Natural killer cell (primary cell): ENCODE measurements at regions of chr5 and their contacts with region 1.

Region 1: GRCh38 chr5:76641514-76642120 is 18.4 kb upstream of the F2RL2 start:
- DNase-seq: peak; percentile 35 to 81
- ATAC-seq: peak; percentile 71 to 81 (median 72)
- H3K4me3 ChIP-seq: no peak overlapping the region
- H3K4me3 Mint-ChIP-seq: no peak overlapping the region
- H3K27ac ChIP-seq: no peak overlapping the region
- H3K27ac Mint-ChIP-seq: peak overlapping the region; percentile 21 to 59
- H3K4me1 ChIP-seq: peaks cover 5% of the 10 kb centered on the region
- H3K4me1 Mint-ChIP-seq: peaks cover 19 to 36% of the 10 kb centered on the region in 2 donors
- H3K27me3 ChIP-seq: no peaks in the 10 kb centered on the region
- H3K27me3 Mint-ChIP-seq: no peaks in the 10 kb centered on the region
- CTCF ChIP-seq: peak; percentile 75

Region 2: DNA sequence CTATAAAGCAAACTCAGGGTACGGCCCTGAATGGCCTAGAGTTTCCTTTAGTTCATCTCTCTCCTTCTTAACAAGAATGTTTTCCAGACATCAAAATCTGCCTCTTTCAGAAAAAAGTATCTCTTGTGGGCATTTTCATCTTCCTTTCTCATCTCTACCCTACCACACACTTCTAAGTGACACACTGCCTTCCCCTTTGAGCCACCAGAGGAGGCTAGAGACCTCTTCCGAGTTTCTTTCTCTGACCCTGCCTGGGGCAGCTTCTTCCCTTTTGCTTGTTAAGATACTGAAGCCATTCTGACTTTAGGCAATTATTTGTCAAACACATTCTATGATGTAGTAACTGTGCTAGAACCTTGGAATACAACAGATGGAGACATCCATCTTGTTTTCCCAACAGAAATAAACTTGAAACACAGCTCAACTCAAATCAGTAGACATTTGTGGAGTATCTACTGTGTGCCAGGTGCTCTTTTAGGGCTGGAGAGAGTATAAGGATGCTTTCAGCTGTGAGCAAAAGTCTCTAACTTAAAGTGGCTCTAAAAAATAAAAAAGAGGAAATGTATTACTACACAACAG is 567.0 kb before region 1 on chr5:
- intact Hi-C with region 1: loop called (anchors 2 kb)
- DNase-seq: peak in 1 of 2 donors; percentile 56
- ATAC-seq: peak; percentile 58 to 63 (median 62)
- H3K4me3 ChIP-seq: no peak overlapping the region
- H3K4me3 Mint-ChIP-seq: no peak overlapping the region
- H3K27ac ChIP-seq: no peak overlapping the region
- H3K27ac Mint-ChIP-seq: no peak overlapping the region
- H3K4me1 ChIP-seq: no peaks in the 10 kb centered on the region
- H3K4me1 Mint-ChIP-seq: no peaks in the 10 kb centered on the region
- H3K27me3 ChIP-seq: peaks cover 3% of the 10 kb centered on the region
- H3K27me3 Mint-ChIP-seq: peaks cover 60 to 87% of the 10 kb centered on the region in 2 donors
- CTCF ChIP-seq: peak; percentile 45

Region 3: GRCh38 chr5:76325876-76326491 is 315.6 kb before region 1 on chr5:
- intact Hi-C with region 1: no loop called
- DNase-seq: peak; percentile 47 to 66
- ATAC-seq: peak; percentile 93 to 94 (median 93)
- H3K4me3 ChIP-seq: no peak overlapping the region
- H3K4me3 Mint-ChIP-seq: peak overlapping the region; percentile 86
- H3K27ac ChIP-seq: peak overlapping the region; percentile 81
- H3K27ac Mint-ChIP-seq: peak overlapping the region; percentile 90 to 94
- H3K4me1 ChIP-seq: peaks cover 52% of the 10 kb centered on the region
- H3K4me1 Mint-ChIP-seq: peaks cover 69 to 78% of the 10 kb centered on the region in 2 donors
- H3K27me3 ChIP-seq: no peaks in the 10 kb centered on the region
- H3K27me3 Mint-ChIP-seq: no peaks in the 10 kb centered on the region
- CTCF ChIP-seq: no peak

Region 4: GRCh38 chr5:76601470-76601869 is 40.1 kb before region 1 on chr5:
- intact Hi-C with region 1: loop called (anchors 1 kb)
- DNase-seq: peak in 1 of 2 donors; percentile 76
- ATAC-seq: peak; percentile 64 to 87 (median 80)
- H3K4me3 ChIP-seq: no peak overlapping the region
- H3K4me3 Mint-ChIP-seq: no peak overlapping the region
- H3K27ac ChIP-seq: no peak overlapping the region
- H3K27ac Mint-ChIP-seq: peak overlapping the region; percentile 42 to 67
- H3K4me1 ChIP-seq: peaks cover 10% of the 10 kb centered on the region
- H3K4me1 Mint-ChIP-seq: peaks cover 40 to 49% of the 10 kb centered on the region in 2 donors
- H3K27me3 ChIP-seq: no peaks in the 10 kb centered on the region
- H3K27me3 Mint-ChIP-seq: no peaks in the 10 kb centered on the region
- CTCF ChIP-seq: peak; percentile 83